Body of pancreas (tissue), 4 donors: ENCODE measurements at regions of chr17 and their contacts with region 1.

Region 1: DNA sequence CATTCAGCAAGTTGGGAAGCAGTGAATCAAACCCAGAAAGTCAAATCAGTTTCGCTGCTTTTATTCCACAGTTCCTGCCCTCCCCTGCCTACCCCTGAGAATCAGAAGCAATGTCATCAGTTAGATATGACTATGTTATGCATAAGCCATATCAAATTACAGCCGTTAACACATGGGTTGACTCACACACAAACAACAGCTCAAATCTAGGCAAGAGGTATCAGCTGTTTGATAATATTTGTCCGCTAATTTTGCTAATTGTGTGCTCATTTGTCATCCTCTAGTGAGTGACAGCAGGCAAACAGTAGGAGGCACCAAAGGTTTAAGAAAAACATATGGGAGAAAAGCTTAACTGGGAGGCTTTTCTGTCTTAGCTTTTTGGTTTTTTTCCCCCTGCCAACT is 327.4 kb upstream of the CCL2 start:
- DNase-seq: no peak
- ATAC-seq: no peak
- H3K4me3 ChIP-seq: no peak overlapping the region
- H3K27ac ChIP-seq: no peak overlapping the region
- H3K4me1 ChIP-seq: no peaks in the 10 kb centered on the region
- H3K27me3 ChIP-seq: no peaks in the 10 kb centered on the region
- CTCF ChIP-seq: peak in 5 of 7 experiments; percentile 7 to 38 (median 25)
- POLR2A ChIP-seq: no peak

Region 2: DNA sequence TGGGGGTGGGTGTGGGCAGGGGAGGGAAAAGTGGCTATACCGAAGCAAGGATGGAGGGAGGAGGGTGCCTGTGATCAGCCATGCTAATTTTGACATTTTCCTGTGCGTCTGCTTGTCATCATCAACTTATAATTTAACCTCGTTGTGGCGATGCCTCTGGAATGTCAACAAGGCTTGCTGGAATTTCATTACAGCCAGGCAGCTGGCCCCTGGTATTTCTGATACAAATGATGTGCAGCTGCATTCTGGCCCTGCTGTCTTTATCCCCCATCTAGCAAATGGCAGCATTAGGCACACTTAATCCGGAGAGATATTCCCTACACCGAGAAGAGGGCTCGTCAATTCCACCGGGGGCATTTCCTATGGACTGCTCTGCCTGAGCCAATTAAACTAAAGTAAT is 49.1 kb after region 1 on chr17:
- intact Hi-C with region 1: no loop called
- DNase-seq: no peak
- ATAC-seq: no peak
- H3K4me3 ChIP-seq: no peak overlapping the region
- H3K27ac ChIP-seq: no peak overlapping the region
- H3K4me1 ChIP-seq: no peaks in the 10 kb centered on the region
- H3K27me3 ChIP-seq: no peaks in the 10 kb centered on the region
- CTCF ChIP-seq: no peak
- POLR2A ChIP-seq: no peak

Region 3: DNA sequence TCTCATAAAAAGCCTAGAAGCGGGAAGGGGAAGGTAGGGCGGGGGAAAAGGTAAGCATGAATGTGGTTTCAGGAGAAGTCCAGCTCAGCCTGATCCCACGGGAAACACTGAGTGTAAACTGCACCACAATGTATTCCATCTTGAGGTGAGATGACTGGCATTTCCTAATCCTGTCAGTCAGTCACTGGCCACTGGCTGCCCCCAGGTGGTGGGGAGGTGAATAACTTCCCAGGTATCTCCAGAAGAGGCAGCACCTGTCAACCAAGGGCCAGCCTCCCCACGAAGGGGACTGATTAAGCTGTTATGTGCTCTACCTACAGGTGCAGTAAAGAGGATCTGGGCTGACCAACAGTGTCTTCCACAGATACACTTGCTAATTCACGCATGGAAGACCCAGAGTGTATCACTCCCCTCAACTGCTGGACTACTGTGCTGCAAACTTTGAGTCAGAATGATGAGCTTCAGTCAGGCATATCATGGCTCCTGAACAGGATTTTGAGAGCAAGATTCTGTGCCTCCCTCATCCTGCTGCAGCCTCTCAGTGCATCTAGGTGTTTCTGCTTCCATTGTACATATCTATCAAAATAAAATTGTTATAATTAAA is 218.8 kb after region 1 on chr17:
- intact Hi-C with region 1: loop called (anchors 10 kb)
- DNase-seq: peak; percentile 74 to 85 (median 75)
- ATAC-seq: peak; percentile 71
- H3K4me3 ChIP-seq: no peak overlapping the region
- H3K27ac ChIP-seq: no peak overlapping the region
- H3K4me1 ChIP-seq: no peaks in the 10 kb centered on the region
- H3K27me3 ChIP-seq: no peaks in the 10 kb centered on the region
- CTCF ChIP-seq: peak; percentile 41 to 93 (median 84)
- POLR2A ChIP-seq: no peak